Panc1 (cell line): ENCODE measurements at regions of chr16 and their contacts with region 1.

Region 1: GRCh38 chr16:3431779-3432219 is 11.5 kb downstream of the ZNF597 start:
- DNase-seq: no peak
- ATAC-seq: no peak
- H3K4me3 ChIP-seq: no peak overlapping the region
- H3K27ac ChIP-seq: no peak overlapping the region
- H3K4me1 ChIP-seq: no peaks in the 10 kb centered on the region
- H3K27me3 ChIP-seq: no peaks in the 10 kb centered on the region
- CTCF ChIP-seq: no peak

Region 2: DNA sequence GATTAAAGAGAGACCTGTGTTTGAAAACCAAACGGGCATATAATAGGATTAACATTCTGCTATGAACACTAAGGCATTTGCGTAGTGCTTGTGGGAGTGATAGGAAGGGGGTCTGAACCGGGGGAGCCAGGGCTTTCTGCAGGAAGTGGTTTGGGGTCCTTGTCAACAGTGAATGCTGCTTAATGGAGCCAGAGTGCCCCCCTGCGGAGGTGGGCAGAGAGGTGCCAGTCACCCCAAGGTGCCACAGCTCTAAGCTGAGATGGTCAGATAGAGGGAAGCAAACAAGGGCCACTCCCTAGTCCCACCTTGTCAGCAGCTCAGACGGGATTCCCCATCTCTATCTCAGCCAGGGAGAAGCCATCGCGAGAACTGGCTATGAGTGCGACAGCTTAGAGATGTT is 29.4 kb after region 1 on chr16:
- CTCF ChIA-PET with region 1: interaction called, 13 read pairs
- POLR2A ChIA-PET with region 1: no interaction called
- in situ Hi-C with region 1: no loop called
- intact Hi-C with region 1: no loop called
- DNase-seq: no peak
- ATAC-seq: no peak
- H3K4me3 ChIP-seq: no peak overlapping the region
- H3K27ac ChIP-seq: no peak overlapping the region
- H3K4me1 ChIP-seq: peaks cover 43% of the 10 kb centered on the region
- H3K27me3 ChIP-seq: no peaks in the 10 kb centered on the region
- CTCF ChIP-seq: no peak

Region 3: GRCh38 chr16:3503523-3503922 is 71.7 kb after region 1 on chr16:
- CTCF ChIA-PET with region 1: no interaction called
- POLR2A ChIA-PET with region 1: no interaction called
- in situ Hi-C with region 1: no loop called
- intact Hi-C with region 1: no loop called
- DNase-seq: no peak
- ATAC-seq: no peak
- H3K4me3 ChIP-seq: no peak overlapping the region
- H3K27ac ChIP-seq: no peak overlapping the region
- H3K4me1 ChIP-seq: 0 out of 2 replicates have a peak, but pooled peaks cover 9% of the 10 kb centered on the region
- H3K27me3 ChIP-seq: no peaks in the 10 kb centered on the region
- CTCF ChIP-seq: no peak